Left colon (tissue), 2 donors: ENCODE measurements at regions of chr1 and their contacts with region 1.

Region 1: DNA sequence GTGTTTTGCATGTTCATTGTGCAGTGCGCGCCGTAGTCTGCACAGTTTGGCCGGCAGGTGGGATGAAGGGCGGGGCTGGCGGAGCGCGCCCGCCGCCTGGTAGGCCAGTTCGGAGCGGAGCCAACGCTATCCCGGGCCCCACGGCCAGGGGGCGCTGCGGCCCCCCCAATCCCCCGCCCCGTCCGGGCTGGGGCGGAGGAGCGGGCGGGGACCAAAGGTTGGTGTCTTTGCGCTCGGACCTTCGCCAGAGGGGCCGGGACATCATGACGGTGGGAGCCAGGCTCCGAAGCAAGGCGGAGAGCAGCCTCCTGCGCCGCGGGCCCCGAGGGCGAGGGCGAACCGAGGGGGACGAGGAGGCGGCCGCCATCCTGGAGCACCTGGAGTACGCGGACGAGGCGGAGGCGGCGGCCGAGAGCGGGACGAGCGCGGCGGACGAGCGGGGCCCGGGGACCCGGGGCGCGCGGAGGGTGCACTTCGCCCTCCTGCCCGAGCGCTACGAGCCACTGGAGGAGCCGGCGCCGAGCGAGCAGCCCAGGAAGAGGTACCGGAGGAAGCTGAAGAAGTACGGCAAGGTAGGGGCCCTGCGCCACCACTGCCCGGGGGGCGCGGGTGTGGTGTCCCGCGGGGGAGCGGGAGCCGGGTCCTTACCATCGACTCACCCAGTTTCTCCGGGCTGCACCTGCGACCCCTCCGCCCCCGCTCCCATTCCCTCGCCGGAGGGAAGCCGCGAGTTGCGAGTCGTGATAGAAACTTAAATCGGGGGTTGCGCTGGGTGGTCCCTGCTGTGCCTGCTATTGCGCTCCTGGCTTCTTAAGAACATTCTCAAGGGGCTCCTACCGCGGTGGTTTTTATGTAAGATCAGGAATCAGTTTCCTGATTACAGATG is at the start of gene C1orf115:
- DNase-seq: peak; percentile 74 to 85
- ATAC-seq: peak; percentile 93
- total RNA-seq, gene C1orf115: 65.8 to 91.6 TPM

Region 2: GRCh38 chr1:220776720-220777326 is 86.4 kb after region 1 on chr1:
- intact Hi-C with region 1: loop called in 1 of 2 experiments (anchors 5 kb)
- DNase-seq: peak; percentile 59 to 92
- ATAC-seq: peak; percentile 99

Region 3: GRCh38 chr1:220887520-220888416 is 197.4 kb after region 1 on chr1:
- intact Hi-C with region 1: no loop called
- DNase-seq: no peak
- ATAC-seq: peak; percentile 25